ENCODE measurements at regions of chr1 and their contacts with region 1.

Region 1: DNA sequence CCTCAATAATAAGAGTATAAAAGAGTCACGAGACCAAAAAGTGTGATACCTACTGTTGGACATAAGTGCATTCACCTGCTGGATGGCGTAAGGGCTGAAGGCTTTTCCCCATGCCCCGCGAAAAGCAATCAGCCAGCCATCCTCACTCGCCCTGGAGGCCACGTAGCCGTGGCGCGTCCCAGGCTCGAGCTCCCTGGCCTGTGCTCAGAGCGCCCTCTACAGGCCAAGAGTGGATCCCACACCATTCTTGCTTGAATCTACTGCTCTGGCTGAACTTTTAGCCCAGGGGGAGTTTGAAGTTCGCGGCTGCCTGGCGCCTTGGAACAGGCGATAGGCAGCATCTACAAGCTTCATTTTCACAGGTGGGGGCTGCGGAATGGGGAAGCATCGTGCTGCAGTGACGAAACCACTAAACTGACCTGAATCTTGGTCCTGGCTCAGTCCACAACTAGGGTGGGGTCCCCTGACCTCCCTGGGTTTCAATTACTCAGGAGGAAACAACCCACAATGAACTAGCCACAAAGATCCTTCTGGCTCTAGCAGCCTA is 70.3 kb upstream of the SERBP1 start:
- DNase-seq: peak; percentile 86
- ATAC-seq: peak; percentile 96
- H3K4me3 ChIP-seq: no peak overlapping the region
- H3K4me3 Mint-ChIP-seq: no peak overlapping the region
- H3K27ac ChIP-seq: no peak overlapping the region
- H3K27ac Mint-ChIP-seq: no peak overlapping the region
- H3K4me1 ChIP-seq: peaks cover 3 to 6% of the 10 kb centered on the region in 2 donors
- H3K4me1 Mint-ChIP-seq: peaks cover 4% of the 10 kb centered on the region
- H3K27me3 ChIP-seq: peaks cover 0 to 6% (median 0%) of the 10 kb centered on the region in 4 experiments
- H3K27me3 Mint-ChIP-seq: peaks cover 18% of the 10 kb centered on the region
- CTCF ChIP-seq: peak; percentile 98

Region 2: GRCh38 chr1:66764994-66765578 is 735.4 kb before region 1 on chr1:
- CTCF ChIA-PET with region 1: interaction called, 9 read pairs
- POLR2A ChIA-PET with region 1: no interaction called
- intact Hi-C with region 1: loop called (anchors 2 kb)
- DNase-seq: peak; percentile 61
- ATAC-seq: peak; percentile 41
- H3K4me3 ChIP-seq: no peak overlapping the region
- H3K4me3 Mint-ChIP-seq: no peak overlapping the region
- H3K27ac ChIP-seq: no peak overlapping the region
- H3K27ac Mint-ChIP-seq: no peak overlapping the region
- H3K4me1 ChIP-seq: no peaks in the 10 kb centered on the region
- H3K4me1 Mint-ChIP-seq: no peaks in the 10 kb centered on the region
- H3K27me3 ChIP-seq: no peaks in the 10 kb centered on the region
- H3K27me3 Mint-ChIP-seq: no peaks in the 10 kb centered on the region
- CTCF ChIP-seq: peak; percentile 88

Region 3: DNA sequence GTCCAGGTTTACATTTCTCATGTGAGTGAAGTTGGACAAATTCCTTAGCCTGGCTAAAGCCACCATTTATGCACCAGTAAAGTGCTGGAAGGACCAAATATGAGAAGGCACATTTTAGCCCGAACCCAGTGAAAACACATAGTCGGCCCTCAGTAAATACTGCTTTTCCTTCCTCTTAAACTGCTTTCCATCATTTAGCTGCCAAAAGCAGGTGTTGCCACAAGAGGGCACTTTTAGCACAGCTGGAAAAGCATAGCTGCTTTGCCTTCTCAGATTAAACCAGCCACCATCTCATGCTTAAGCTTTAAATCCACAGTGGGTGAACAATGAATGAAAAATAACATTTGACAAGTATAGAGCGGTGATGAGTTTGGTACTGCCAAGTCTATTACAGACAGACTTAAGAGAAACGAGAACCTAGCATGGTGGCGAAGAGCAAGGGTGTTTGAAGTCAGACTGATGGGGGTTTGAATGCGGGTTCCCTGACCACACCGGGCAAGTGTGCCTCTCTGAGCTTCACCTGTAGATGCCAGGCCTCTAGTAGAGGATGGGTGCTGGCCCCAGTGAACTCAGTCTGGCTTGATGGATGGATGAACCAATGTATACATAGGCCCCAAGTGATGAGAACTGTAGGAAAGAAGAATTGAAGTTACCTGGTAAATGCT is 504.3 kb before region 1 on chr1:
- CTCF ChIA-PET with region 1: interaction called, 10 read pairs
- POLR2A ChIA-PET with region 1: no interaction called
- intact Hi-C with region 1: loop called (anchors 2 kb)
- DNase-seq: peak; percentile 79
- ATAC-seq: peak; percentile 78
- H3K4me3 ChIP-seq: no peak overlapping the region
- H3K4me3 Mint-ChIP-seq: no peak overlapping the region
- H3K27ac ChIP-seq: no peak overlapping the region
- H3K27ac Mint-ChIP-seq: no peak overlapping the region
- H3K4me1 ChIP-seq: peaks cover 3 to 4% of the 10 kb centered on the region in 2 donors
- H3K4me1 Mint-ChIP-seq: peaks cover 8% of the 10 kb centered on the region
- H3K27me3 ChIP-seq: no peaks in the 10 kb centered on the region
- H3K27me3 Mint-ChIP-seq: no peaks in the 10 kb centered on the region
- CTCF ChIP-seq: peak; percentile 77

Region 4: DNA sequence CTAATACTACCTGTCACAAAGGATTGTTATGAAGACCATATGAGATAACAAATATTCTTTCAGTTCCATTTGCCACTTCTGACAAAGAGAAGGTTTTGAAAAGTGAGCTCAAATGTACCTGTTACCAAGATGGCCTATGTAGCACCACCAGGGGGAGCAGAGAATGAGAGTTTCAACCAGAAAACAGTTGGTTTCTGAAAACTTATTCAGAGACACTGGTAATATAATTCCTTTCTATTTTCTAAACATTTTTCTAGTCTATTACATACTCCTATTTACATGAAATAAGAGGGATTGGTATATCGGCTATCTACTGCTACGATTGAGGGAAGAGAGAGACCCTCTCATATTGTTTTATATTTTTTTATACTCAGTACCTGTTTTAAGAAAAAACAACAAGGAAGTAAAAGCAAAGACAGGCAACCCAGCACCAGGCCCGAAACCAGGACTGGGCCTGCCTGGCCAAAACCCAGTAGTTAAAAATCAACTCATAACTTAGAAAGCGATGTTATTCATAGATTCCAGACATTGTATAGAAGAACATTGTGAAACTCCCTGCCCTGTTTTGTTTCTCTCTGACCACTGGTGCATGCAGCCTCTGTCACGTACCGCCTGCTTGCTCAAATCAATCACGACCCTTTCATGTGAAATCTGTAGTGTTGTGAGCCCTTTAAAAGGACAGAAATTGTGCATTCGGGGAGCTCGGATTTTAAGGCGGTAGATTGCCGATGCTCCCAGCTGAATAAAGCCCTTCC is 285.9 kb before region 1 on chr1:
- CTCF ChIA-PET with region 1: interaction called, 104 read pairs
- POLR2A ChIA-PET with region 1: no interaction called
- intact Hi-C with region 1: loop called (anchors 1 kb)
- DNase-seq: peak; percentile 50
- ATAC-seq: peak; percentile 28
- H3K4me3 ChIP-seq: no peak overlapping the region
- H3K4me3 Mint-ChIP-seq: no peak overlapping the region
- H3K27ac ChIP-seq: no peak overlapping the region
- H3K27ac Mint-ChIP-seq: no peak overlapping the region
- H3K4me1 ChIP-seq: peaks cover 0 to 8% of the 10 kb centered on the region in 2 donors
- H3K4me1 Mint-ChIP-seq: peaks cover 9% of the 10 kb centered on the region
- H3K27me3 ChIP-seq: no peaks in the 10 kb centered on the region
- H3K27me3 Mint-ChIP-seq: no peaks in the 10 kb centered on the region
- CTCF ChIP-seq: peak; percentile 70

Region 5: DNA sequence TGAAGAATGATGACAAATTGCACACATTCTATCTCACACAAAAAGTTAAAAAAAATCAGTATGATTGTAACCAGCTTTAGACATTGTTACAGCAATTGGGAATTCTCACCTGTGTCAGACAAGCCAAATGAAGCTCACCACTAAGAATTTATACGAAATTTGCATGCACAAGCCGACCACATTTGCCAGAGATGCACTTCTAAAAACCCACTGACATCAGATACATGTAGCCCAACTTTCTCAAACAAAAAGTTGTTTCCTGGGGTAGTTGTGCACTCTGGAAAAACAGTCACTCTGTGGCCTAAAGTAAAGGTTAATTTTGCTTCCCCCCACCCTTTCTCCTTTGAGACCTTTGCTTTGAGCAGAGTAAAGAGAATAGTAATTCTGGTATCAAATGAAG is 260.7 kb before region 1 on chr1:
- CTCF ChIA-PET with region 1: interaction called, 80 read pairs
- POLR2A ChIA-PET with region 1: no interaction called
- intact Hi-C with region 1: loop called (anchors 1 kb)
- DNase-seq: no peak
- ATAC-seq: no peak
- H3K4me3 ChIP-seq: no peak overlapping the region
- H3K4me3 Mint-ChIP-seq: no peak overlapping the region
- H3K27ac ChIP-seq: no peak overlapping the region
- H3K27ac Mint-ChIP-seq: no peak overlapping the region
- H3K4me1 ChIP-seq: no peaks in the 10 kb centered on the region
- H3K4me1 Mint-ChIP-seq: no peaks in the 10 kb centered on the region
- H3K27me3 ChIP-seq: no peaks in the 10 kb centered on the region
- H3K27me3 Mint-ChIP-seq: no peaks in the 10 kb centered on the region
- CTCF ChIP-seq: no peak

Region 6: DNA sequence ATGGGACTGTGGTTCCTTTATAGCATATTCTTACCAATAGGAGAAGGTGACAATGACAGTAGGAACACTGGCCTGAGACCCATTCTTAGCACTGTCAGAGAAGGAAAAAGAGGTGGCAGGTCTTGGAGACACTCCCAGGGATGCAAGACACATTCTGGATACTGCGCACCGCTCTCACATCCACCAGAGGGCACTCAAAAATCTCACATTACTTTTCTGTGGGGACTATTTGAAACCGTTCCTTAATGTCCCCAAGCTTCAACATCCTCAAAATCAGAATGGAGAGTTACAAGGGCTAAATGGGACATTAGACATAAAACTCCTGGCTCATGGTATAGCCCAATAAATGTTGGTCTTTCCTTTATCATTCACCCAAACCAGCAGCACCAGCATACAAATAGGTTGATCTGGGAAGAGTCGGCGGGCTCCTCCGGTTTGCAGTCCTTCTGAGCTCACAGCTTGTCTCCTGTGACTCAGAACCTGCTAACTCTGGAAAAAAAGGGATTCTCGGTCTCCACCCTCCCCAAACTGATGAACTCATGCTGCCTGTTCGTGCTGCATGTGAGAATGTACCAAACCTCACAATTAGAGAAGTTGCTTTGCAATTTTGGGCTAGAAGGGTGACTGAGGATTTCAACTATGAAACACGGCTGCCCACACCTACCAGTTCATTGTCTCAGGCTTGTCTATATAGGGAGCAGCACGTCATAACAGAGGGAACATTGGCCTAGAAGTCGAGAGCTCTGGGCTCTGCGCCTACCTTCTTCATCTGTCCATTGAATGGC is 152.6 kb before region 1 on chr1:
- CTCF ChIA-PET with region 1: interaction called, 28 read pairs
- POLR2A ChIA-PET with region 1: no interaction called
- intact Hi-C with region 1: loop called (anchors 1 kb)
- DNase-seq: peak; percentile 27
- ATAC-seq: no peak
- H3K4me3 ChIP-seq: no peak overlapping the region
- H3K4me3 Mint-ChIP-seq: no peak overlapping the region
- H3K27ac ChIP-seq: no peak overlapping the region
- H3K27ac Mint-ChIP-seq: no peak overlapping the region
- H3K4me1 ChIP-seq: no peaks in the 10 kb centered on the region
- H3K4me1 Mint-ChIP-seq: peaks cover 5% of the 10 kb centered on the region
- H3K27me3 ChIP-seq: no peaks in the 10 kb centered on the region
- H3K27me3 Mint-ChIP-seq: peaks cover 3% of the 10 kb centered on the region
- CTCF ChIP-seq: peak; percentile 50

Region 7: DNA sequence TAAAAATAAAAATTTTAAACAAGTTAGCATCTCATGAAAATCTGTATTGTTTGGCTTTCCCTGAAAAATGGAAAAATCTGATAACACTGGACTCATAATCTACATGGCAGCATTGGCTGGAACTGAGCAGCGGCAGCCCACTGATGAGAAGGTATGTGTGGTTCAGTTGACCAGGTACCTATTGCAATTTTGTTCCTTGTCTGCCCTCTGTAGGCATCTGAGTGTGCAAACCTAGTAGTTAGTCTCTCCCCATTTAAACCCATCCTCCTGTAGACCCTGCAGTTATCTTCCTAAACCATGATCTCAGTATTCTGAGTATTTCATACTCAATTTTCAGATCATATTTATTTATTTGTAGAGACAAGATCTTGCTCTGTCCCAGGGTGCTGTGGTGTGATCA is 10.8 kb before region 1 on chr1:
- CTCF ChIA-PET with region 1: interaction called, 29 read pairs
- POLR2A ChIA-PET with region 1: no interaction called
- intact Hi-C with region 1: no loop called
- DNase-seq: peak; percentile 36
- ATAC-seq: peak; percentile 41
- H3K4me3 ChIP-seq: no peak overlapping the region
- H3K4me3 Mint-ChIP-seq: no peak overlapping the region
- H3K27ac ChIP-seq: no peak overlapping the region
- H3K27ac Mint-ChIP-seq: no peak overlapping the region
- H3K4me1 ChIP-seq: no peaks in the 10 kb centered on the region
- H3K4me1 Mint-ChIP-seq: no peaks in the 10 kb centered on the region
- H3K27me3 ChIP-seq: no peaks in the 10 kb centered on the region
- H3K27me3 Mint-ChIP-seq: no peaks in the 10 kb centered on the region
- CTCF ChIP-seq: no peak